Left ventricle myocardium superior (tissue), 1 donor: ENCODE measurements at regions of chr10 and their contacts with region 1.

Region 1: GRCh38 chr10:11260170-11260569 is 242.5 kb downstream of the CELF2 start:
- DNase-seq: no peak
- ATAC-seq: peak; percentile 10

Region 2: GRCh38 chr10:11036407-11037011 is 223.7 kb before region 1 on chr10:
- intact Hi-C with region 1: loop called (anchors 10 kb)
- DNase-seq: no peak
- ATAC-seq: peak; percentile 52

Region 3: DNA sequence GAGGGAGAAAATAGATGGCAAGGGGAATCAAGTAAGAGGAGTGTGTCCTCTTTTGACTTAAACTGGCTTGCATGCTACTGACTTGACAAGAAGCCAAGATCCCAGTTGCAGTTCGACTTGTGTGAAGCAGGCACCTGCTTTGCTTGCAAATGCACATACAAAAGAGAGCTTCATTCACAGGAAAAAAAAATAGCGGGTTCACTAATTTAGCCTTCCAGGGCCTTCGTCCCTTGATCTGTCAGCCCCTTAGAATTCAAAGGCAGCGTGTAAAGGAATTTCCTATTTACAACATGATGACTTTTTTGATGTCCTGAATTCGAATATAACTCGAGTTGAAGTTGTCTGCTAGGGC is 50.4 kb before region 1 on chr10:
- intact Hi-C with region 1: loop called (anchors 10 kb)
- DNase-seq: no peak
- ATAC-seq: peak; percentile 59